ENCODE measurements at regions of chr4 and their contacts with region 1.

Region 1: GRCh38 chr4:74038161-74039064 is at the start of gene CXCL3:
- DNase-seq: peak; percentile 80 to 92 (median 91)
- ATAC-seq: peak; percentile 96 to 98
- H3K4me3 ChIP-seq: peak within 1 kb of the TSS; percentile 98
- H3K27ac ChIP-seq: peak within 1 kb of the TSS; percentile 57
- H3K4me1 ChIP-seq: no peaks in the 10 kb centered on the region
- H3K27me3 ChIP-seq: no peaks in the 10 kb centered on the region
- total RNA-seq, gene CXCL3: 0.50 to 1.9 (median 0.78) TPM

Region 2: DNA sequence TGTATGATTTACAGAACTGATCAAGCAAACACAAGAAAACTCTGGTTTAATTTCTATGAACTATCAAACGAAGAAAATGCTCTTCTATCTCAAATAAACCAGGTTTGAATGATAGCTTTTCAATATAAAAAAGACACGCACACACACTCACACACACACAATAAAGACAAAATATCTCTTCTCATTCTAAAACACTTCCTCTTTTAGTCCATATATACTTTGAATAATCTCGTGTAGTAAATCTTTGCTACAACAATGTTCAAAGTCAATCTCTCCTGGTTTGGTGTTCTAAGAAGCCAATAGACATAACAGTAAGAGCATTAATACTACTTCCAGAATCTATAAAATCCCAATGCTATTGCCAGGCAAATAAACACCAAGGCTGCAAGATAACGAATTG is 47.3 kb after region 1 on chr4:
- intact Hi-C with region 1: loop called in 1 of 4 experiments (anchors 5 kb)
- DNase-seq: no peak
- ATAC-seq: no peak
- H3K4me3 ChIP-seq: no peak overlapping the region
- H3K27ac ChIP-seq: no peak overlapping the region
- H3K4me1 ChIP-seq: peaks cover 1% of the 10 kb centered on the region
- H3K27me3 ChIP-seq: no peaks in the 10 kb centered on the region

Measured in right cardiac atrium (tissue), 5 donors.